A549 (cell line): ENCODE measurements at regions of chr12 and their contacts with region 1.

Region 1: GRCh38 chr12:56636675-56637540 is 6.8 kb upstream of the BAZ2A start:
- DNase-seq: peak; percentile 99 to 100
- ATAC-seq: peak; percentile 63 to 77
- H3K4me3 ChIP-seq: peak overlapping the region; percentile 80
- H3K27ac ChIP-seq: peak overlapping the region; percentile 89 to 97
- H3K4me1 ChIP-seq: peaks cover 35% of the 10 kb centered on the region
- CTCF ChIP-seq: peak; percentile 77
- EP300 ChIP-seq: no peak
- POLR2A ChIP-seq: no peak
- RAD21 ChIP-seq: peak; percentile 74 to 75

Region 2: GRCh38 chr12:56510786-56511185 is 126.1 kb before region 1 on chr12:
- CTCF ChIA-PET with region 1: interaction called, 74 read pairs
- POLR2A ChIA-PET with region 1: interaction called, 3 read pairs
- DNase-seq: no peak
- ATAC-seq: no peak
- H3K4me3 ChIP-seq: no peak overlapping the region
- H3K27ac ChIP-seq: no peak overlapping the region
- H3K4me1 ChIP-seq: no peaks in the 10 kb centered on the region
- CTCF ChIP-seq: no peak
- EP300 ChIP-seq: no peak
- POLR2A ChIP-seq: no peak
- RAD21 ChIP-seq: no peak

Region 3: GRCh38 chr12:56581418-56582145 is 55.3 kb before region 1 on chr12:
- CTCF ChIA-PET with region 1: interaction called, 12 read pairs
- POLR2A ChIA-PET with region 1: no interaction called
- DNase-seq: no peak
- ATAC-seq: peak; percentile 34 to 39; a peak in 3 of 6 replicates
- H3K4me3 ChIP-seq: no peak overlapping the region
- H3K27ac ChIP-seq: no peak overlapping the region
- H3K4me1 ChIP-seq: peaks cover 8% of the 10 kb centered on the region
- CTCF ChIP-seq: no peak
- EP300 ChIP-seq: no peak
- POLR2A ChIP-seq: no peak
- RAD21 ChIP-seq: no peak

Region 4: DNA sequence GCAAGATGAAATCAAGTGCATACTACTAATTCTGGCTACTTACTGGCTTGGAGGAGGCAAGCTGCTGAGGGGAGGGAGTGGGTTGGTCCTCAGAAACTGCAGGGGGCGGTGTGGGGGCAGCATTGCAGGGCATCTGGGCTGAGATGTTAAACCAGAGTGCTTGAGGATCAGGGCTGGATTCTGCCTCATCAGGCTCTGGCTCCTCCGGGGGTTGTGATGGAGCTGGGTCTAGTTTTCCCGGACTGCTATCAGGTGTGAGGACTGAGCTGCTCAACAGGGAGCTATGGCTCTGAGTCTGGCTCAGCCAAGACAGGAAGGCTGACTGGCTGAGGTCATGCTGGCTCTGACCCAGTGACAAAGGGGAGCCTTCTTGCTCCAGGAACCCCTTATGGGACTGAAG is 35.4 kb before region 1 on chr12:
- CTCF ChIA-PET with region 1: interaction called, 49 read pairs
- POLR2A ChIA-PET with region 1: no interaction called
- DNase-seq: peak; percentile 29 to 43
- ATAC-seq: peak; percentile 40 to 72; a peak in 4 of 6 replicates
- H3K4me3 ChIP-seq: no peak overlapping the region
- H3K27ac ChIP-seq: no peak overlapping the region
- H3K4me1 ChIP-seq: no peaks in the 10 kb centered on the region
- CTCF ChIP-seq: peak; percentile 14; the same call in 1 of the 3 replicates
- EP300 ChIP-seq: no peak
- POLR2A ChIP-seq: no peak
- RAD21 ChIP-seq: peak in 1 of 2 experiments; percentile 43; a peak in 2 of 5 replicates

Region 5: GRCh38 chr12:56677680-56678079 is 40.8 kb after region 1 on chr12:
- CTCF ChIA-PET with region 1: interaction called, 20 read pairs
- POLR2A ChIA-PET with region 1: no interaction called
- DNase-seq: no peak
- ATAC-seq: no peak
- H3K4me3 ChIP-seq: no peak overlapping the region
- H3K27ac ChIP-seq: no peak overlapping the region
- H3K4me1 ChIP-seq: peaks cover 48% of the 10 kb centered on the region
- CTCF ChIP-seq: no peak
- EP300 ChIP-seq: no peak
- POLR2A ChIP-seq: no peak
- RAD21 ChIP-seq: no peak

Region 6: GRCh38 chr12:56785141-56785865 is 148.4 kb after region 1 on chr12:
- CTCF ChIA-PET with region 1: no interaction called
- POLR2A ChIA-PET with region 1: no interaction called
- DNase-seq: no peak
- ATAC-seq: no peak; a peak in 1 of 6 replicates
- H3K4me3 ChIP-seq: no peak overlapping the region
- H3K27ac ChIP-seq: no peak overlapping the region
- H3K4me1 ChIP-seq: no peaks in the 10 kb centered on the region
- CTCF ChIP-seq: no peak
- EP300 ChIP-seq: no peak
- POLR2A ChIP-seq: no peak
- RAD21 ChIP-seq: no peak

Region 7: DNA sequence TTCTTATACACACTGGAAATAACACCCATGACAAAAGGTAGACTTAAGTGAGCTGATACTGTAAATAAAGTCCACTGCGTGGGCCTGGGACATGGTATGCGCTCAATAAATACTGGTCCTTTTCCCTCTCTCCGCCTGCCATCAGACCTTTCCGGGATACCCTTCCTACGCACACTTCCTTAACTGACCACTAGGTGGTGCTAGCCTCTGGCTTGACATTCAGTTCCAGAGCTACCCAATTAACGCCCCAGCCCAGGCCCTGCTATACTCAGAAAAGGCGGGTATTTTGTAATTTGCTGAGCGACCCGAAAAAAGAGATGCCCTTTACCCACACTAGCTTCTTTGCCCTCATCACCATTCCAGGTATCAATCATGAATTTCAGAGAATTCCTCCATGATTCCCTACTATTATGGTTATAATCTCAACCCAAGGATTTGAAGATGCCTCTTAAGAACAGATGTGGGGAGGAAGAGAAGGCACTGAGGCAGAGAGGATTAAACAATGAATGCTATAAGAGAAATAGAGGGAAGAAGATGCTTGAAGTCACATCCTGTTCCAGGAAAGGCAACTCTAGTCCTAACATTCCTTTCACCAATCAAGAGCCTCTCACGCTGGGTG is 487.5 kb after region 1 on chr12:
- CTCF ChIA-PET with region 1: no interaction called
- POLR2A ChIA-PET with region 1: no interaction called
- DNase-seq: peak; percentile 77 to 84
- ATAC-seq: peak; percentile 46 to 61; a peak in 3 of 6 replicates
- H3K4me3 ChIP-seq: no peak overlapping the region
- H3K27ac ChIP-seq: no peak overlapping the region
- H3K4me1 ChIP-seq: peaks cover 10% of the 10 kb centered on the region; the same call in 2 of the 3 replicates
- CTCF ChIP-seq: peak; percentile 94
- EP300 ChIP-seq: no peak
- POLR2A ChIP-seq: no peak
- RAD21 ChIP-seq: peak; percentile 86 to 92